ENCODE measurements at regions of chrX and their contacts with region 1.

Region 1: DNA sequence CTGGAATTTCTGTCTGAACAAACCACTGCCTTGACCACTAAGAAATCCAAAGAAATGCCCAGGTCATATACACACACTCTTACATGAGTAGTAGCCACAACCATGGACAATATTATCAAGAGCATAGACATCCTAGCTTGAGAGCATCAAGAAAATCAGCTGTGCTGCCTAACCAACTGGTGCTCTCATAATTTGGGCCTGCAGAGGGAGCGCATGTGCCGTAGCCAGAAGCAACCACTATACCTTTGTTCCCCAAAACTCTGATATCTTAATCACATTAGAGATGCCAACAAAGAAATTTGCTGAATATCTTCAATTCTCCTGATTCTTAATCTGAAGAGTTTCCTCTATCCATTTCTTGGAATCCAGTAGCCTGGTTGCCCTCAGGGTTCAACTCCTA is 163.6 kb downstream of the ZNF674 start:
- DNase-seq: peak in 4 of 9 donors; percentile 8 to 23 (median 16)
- ATAC-seq: no peak
- H3K4me3 ChIP-seq: no peak overlapping the region
- H3K4me3 Mint-ChIP-seq: no peak overlapping the region
- H3K27ac ChIP-seq: no peak overlapping the region
- H3K27ac Mint-ChIP-seq: no peak overlapping the region
- H3K4me1 ChIP-seq: no peaks in the 10 kb centered on the region
- H3K4me1 Mint-ChIP-seq: peaks cover 0 to 2% (median 0%) of the 10 kb centered on the region in 7 donors
- H3K27me3 ChIP-seq: no peaks in the 10 kb centered on the region
- H3K27me3 Mint-ChIP-seq: peaks cover 0 to 6% (median 0%) of the 10 kb centered on the region in 5 donors

Region 2: DNA sequence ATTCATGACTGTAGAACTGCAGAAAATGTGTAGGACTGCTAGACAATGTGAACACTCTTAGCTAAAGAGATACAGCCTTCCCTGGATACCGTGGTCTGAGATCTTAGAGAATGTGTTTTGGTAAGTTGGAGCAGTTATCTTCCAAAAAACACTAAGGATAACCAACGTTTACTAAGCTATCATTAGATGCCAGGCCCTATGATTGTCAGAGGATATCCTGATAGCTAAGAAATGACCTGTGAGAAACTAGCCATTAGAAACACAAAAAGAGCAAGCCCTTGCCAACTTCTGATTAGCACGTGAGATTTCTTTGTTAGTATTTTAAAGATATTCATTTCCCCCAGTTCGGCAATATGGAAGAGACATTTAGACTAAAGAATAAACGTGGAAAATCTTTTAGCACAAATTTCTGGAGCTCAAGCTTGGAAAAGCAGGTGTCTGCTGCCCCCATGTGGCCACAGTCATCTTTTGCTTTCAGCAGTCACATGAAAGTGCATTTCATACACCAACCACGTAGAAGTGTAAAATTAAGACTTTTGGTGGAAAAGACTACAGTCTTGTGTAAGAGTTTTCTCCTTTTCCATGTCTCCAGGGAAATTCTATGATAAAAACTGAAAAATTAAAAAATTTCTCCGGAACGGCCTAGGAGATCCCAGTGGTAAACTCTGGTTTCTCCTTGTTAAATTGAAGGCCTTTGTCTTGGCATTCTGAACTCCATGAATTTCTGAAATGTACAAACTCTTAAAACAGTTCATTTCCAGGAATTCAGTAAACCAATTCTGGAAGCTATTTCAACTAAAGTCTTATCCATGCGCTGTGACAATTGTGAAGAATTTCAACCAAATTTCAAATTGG is 27.1 kb after region 1 on chrX:
- CTCF ChIA-PET with region 1: interaction called, 3 read pairs
- POLR2A ChIA-PET with region 1: no interaction called
- intact Hi-C with region 1: loop called in 1 of 2 experiments (anchors 2 kb)
- DNase-seq: peak; percentile 12 to 61 (median 38)
- ATAC-seq: peak; percentile 54
- H3K4me3 ChIP-seq: no peak overlapping the region
- H3K4me3 Mint-ChIP-seq: no peak overlapping the region
- H3K27ac ChIP-seq: no peak overlapping the region
- H3K27ac Mint-ChIP-seq: peak overlapping the region in 1 of 9 donors; percentile 59
- H3K4me1 ChIP-seq: no peaks in the 10 kb centered on the region
- H3K4me1 Mint-ChIP-seq: peaks cover 0 to 2% (median 0%) of the 10 kb centered on the region in 7 donors
- H3K27me3 ChIP-seq: no peaks in the 10 kb centered on the region
- H3K27me3 Mint-ChIP-seq: peaks cover 0 to 5% (median 0%) of the 10 kb centered on the region in 5 donors

Region 3: DNA sequence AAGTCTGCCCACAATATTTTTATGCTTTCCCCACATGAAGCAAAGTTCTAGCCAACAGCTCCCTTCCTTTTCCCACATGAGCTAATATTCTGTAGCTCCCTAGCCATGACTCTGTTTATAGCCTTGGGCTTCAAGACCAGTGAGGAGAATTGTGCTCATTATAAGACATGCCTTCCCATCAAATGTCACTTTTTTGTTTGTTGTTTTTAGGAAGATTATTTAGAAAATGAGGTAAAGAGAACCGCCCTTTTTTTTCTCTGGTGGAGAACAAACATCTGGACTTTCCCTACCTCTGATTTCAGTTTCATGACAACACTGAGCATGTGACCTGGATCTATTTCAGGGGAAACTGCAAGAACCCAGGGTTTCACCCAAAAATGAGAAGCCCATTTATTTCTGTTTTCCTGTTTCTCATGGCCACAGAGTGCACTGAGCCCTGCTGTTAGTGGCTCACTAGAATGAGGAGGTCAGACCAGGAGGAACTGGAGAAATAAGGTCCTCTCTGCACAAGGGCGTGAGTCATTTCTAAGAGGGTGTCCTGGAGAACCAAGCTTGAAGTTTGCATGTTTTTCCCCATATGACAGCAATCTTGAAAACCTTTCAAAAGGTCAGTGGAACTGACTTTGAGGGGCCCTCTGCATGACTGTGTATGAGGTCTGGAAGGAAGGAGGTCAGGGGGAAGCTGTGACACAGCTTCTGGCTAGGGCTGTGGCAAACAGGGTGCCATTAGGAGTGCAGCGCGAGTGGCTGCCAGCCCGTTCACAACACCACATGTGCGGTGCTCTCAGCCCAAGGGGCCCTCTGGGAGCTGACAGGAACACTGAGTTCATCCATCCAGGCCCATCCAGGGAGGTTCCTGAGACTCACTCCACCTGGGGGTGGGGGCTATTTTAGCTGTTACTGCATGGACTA is 247.1 kb after region 1 on chrX:
- CTCF ChIA-PET with region 1: no interaction called
- POLR2A ChIA-PET with region 1: no interaction called
- intact Hi-C with region 1: no loop called
- DNase-seq: peak in 1 of 9 donors; percentile 36
- ATAC-seq: peak; percentile 83
- H3K4me3 ChIP-seq: no peak overlapping the region
- H3K4me3 Mint-ChIP-seq: peak overlapping the region in 1 of 10 donors; percentile 76
- H3K27ac ChIP-seq: no peak overlapping the region
- H3K27ac Mint-ChIP-seq: peak overlapping the region in 1 of 9 donors; percentile 92
- H3K4me1 ChIP-seq: peaks cover 0 to 6% of the 10 kb centered on the region in 2 donors
- H3K4me1 Mint-ChIP-seq: peaks cover 0 to 43% (median 9%) of the 10 kb centered on the region in 7 donors
- H3K27me3 ChIP-seq: no peaks in the 10 kb centered on the region
- H3K27me3 Mint-ChIP-seq: peaks cover 0 to 2% (median 0%) of the 10 kb centered on the region in 5 donors

Region 4: GRCh38 chrX:46642145-46642544 is 260.5 kb after region 1 on chrX:
- CTCF ChIA-PET with region 1: no interaction called
- POLR2A ChIA-PET with region 1: no interaction called
- intact Hi-C with region 1: loop called (anchors 5 kb)
- DNase-seq: peak in 6 of 9 donors; percentile 3 to 54 (median 38)
- ATAC-seq: peak; percentile 65
- H3K4me3 ChIP-seq: no peak overlapping the region
- H3K4me3 Mint-ChIP-seq: no peak overlapping the region
- H3K27ac ChIP-seq: no peak overlapping the region
- H3K27ac Mint-ChIP-seq: no peak overlapping the region
- H3K4me1 ChIP-seq: no peaks in the 10 kb centered on the region
- H3K4me1 Mint-ChIP-seq: peaks cover 0 to 17% (median 0%) of the 10 kb centered on the region in 7 donors
- H3K27me3 ChIP-seq: no peaks in the 10 kb centered on the region
- H3K27me3 Mint-ChIP-seq: no peaks in the 10 kb centered on the region

Region 5: DNA sequence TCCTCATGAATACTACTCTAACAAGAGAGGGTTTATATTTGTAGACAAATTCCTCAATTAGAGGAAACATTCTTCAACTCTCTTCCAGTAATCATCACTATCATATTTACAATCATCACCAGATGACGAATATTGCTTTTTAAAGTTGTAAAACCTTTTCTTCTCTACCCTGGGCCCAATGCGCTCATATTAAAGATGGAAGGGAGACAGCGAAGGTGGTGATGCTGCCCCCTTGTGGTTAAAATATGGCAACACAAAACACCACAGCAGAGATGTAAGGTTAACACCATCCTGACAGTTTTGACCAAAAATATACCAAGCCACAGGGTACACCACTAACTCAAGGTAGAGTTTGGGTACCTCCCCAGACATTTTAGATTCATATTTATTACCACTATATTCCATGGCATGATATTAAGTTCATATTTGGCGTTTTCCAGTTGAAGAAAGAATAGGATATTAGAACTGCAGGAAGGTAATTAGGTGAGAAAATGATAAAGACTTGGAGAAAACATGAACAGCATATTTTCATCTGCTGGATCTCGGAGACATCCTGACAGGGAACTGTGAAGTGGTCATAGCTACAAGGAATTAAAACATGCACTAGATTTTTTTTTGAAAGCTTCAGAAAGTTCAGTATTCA is 304.5 kb after region 1 on chrX:
- CTCF ChIA-PET with region 1: no interaction called
- POLR2A ChIA-PET with region 1: no interaction called
- intact Hi-C with region 1: loop called (anchors 1 kb)
- DNase-seq: peak in 6 of 9 donors; percentile 5 to 42 (median 28)
- ATAC-seq: peak; percentile 54
- H3K4me3 ChIP-seq: no peak overlapping the region
- H3K4me3 Mint-ChIP-seq: no peak overlapping the region
- H3K27ac ChIP-seq: no peak overlapping the region
- H3K27ac Mint-ChIP-seq: no peak overlapping the region
- H3K4me1 ChIP-seq: no peaks in the 10 kb centered on the region
- H3K4me1 Mint-ChIP-seq: peaks cover 0 to 15% (median 0%) of the 10 kb centered on the region in 7 donors
- H3K27me3 ChIP-seq: no peaks in the 10 kb centered on the region
- H3K27me3 Mint-ChIP-seq: no peaks in the 10 kb centered on the region

Region 6: GRCh38 chrX:46796574-46797191 is 415.1 kb after region 1 on chrX:
- CTCF ChIA-PET with region 1: no interaction called
- POLR2A ChIA-PET with region 1: no interaction called
- intact Hi-C with region 1: loop called in 1 of 2 experiments (anchors 5 kb)
- DNase-seq: peak; percentile 25 to 67 (median 52)
- ATAC-seq: peak; percentile 76
- H3K4me3 ChIP-seq: no peak overlapping the region
- H3K4me3 Mint-ChIP-seq: no peak overlapping the region
- H3K27ac ChIP-seq: no peak overlapping the region
- H3K27ac Mint-ChIP-seq: no peak overlapping the region
- H3K4me1 ChIP-seq: no peaks in the 10 kb centered on the region
- H3K4me1 Mint-ChIP-seq: peaks cover 0 to 19% (median 6%) of the 10 kb centered on the region in 7 donors
- H3K27me3 ChIP-seq: no peaks in the 10 kb centered on the region
- H3K27me3 Mint-ChIP-seq: peaks cover 0 to 6% (median 0%) of the 10 kb centered on the region in 5 donors